ENCODE measurements at regions of chr12 and their contacts with region 1.

Region 1: DNA sequence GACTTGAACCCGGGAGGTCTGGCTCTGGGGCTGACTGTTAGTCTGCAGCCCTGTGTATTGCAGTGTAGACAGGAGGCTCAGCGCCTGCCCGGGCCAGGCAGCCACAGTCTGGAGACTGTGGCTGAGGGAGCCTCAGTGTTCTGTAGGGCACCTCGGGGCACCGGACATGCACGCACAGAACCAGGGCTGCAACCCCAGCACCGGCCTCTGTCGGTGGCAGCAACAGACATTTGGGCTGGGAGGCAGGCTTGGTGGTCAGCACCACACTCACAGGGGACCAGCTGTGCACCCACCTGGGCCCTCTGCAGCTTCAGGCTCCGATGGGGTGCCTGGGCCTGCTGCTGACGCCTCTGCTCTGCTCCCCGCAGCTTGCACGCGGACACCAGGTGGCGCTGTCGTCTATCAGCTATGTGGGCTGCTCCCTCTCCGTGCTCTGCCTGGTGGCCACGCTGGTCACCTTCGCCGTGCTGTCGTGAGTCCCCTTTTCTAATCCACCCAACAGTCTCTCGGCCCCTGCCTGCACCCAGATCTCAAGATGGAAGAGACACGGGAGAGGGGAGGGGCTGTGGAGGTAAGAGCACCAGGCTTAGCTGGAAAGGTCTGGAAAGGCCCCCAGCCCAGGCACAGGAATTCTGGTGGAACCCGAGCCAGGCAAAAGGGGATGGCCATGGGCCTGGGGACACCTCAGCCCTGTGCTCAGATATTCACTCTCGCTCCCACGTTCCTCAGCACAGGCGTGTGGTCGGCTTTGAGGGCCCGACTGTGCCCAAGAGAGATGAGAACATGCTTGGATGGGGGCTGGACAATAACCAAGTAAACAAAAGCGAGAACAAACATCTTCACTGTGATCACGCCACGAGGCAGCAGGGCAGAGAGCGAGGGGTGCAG is 151.0 kb downstream of the ADGRD1 start:
- DNase-seq: peak; percentile 96

Region 2: GRCh38 chr12:131454418-131455217 is 349.9 kb after region 1 on chr12:
- intact Hi-C with region 1: loop called in 1 of 2 experiments (anchors 10 kb)
- DNase-seq: no peak

Measured in posterior vena cava (tissue), 2 donors.